ENCODE measurements at regions of chr9 and their contacts with region 1.

Region 1: GRCh38 chr9:105191508-105192121 is 52.8 kb upstream of the SLC44A1 start:
- DNase-seq: no peak
- H3K4me3 ChIP-seq: no peak overlapping the region
- CTCF ChIP-seq: no peak

Region 2: DNA sequence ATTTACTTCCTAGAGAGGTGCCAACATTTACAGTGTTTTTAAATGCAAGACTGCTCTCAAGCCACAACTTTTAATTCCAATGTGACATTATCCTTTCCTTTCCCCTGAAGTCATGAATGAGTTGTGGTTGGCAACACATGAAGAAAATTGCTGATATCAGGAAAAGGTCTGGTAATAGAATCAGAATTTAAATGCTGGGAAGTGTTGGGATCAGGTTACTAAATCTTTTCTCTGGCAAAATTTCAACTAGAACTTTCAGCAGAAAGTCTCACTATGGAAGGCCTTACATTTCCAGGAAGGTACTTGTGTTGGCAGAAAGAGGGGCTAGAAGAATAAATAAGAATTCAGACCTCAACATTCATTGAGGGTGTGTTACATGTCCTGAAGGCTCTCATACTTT is 42.3 kb after region 1 on chr9:
- in situ Hi-C with region 1: no loop called
- DNase-seq: peak; percentile 51
- H3K4me3 ChIP-seq: no peak overlapping the region
- CTCF ChIP-seq: no peak

Region 3: DNA sequence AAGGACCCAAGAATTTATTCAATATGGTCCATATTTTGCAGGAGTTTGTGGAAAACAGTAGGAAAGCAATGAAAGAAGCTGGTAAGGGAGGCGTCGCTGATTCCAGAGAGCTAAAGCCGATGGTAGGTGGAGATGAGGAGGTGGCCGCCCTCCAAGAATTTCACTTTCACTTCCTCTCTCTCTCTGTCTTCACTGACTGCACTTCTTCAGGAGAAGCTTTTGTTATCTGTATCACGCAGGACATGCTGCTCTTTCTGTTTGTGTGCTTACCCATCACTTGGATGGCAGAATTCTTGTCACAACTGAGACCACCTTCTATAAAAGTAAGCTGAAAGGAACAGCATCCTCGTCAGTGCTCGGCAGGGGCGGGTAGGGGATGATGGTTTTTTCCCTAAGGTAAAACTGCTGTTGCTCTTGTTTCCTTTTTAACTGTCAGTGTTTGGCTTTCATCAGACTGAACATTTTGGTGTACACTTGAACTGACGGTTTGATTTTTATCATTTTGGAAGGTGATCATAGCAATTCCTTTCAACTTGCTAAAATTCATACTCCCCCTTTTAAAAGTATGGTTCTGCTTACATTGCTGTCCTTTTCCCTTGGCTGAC is 193.9 kb after region 1 on chr9:
- in situ Hi-C with region 1: loop called (anchors 25 kb)
- DNase-seq: no peak
- H3K4me3 ChIP-seq: no peak overlapping the region
- CTCF ChIP-seq: no peak

Measured in astrocyte of the cerebellum (primary cell).